H1 (cell line): ENCODE measurements at regions of chr15 and their contacts with region 1.

Region 1: DNA sequence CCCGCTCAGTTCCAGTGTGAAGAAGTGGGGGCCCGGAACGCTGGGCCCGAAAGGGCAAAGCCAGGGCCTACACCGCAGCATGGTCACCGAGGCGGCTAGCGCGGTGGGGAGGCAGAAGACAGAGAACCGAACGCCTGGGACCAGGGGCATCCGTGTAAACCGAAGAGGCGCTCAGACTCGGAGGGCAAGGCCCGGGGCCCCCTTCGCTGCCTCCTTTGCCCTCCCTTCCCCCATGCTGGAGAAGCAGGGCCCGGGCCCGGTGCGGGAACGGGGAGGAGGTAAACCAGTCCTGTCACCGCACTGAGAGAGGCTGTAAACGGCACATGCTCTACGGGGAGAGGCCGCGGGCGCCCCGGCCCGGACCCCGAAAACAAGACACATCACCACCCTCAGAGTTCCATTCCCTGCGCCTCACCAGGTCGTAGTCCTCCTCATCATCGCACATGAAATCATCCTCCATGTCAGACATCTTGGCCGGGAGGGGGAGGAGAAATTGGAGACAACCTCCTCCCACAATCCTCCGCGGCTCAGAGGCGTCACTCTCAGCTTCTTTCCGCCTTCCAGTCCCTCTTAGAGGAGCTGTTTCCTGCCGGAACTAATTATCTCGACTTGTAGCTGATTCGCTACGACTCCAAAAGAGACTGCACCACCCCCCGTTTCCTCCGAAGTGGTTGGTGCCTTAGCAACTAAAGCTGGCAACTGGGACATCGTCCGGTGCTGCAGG is at the start of gene COPS2:
- DNase-seq: peak; percentile 91 to 93
- H3K4me3 ChIP-seq: peak within 1 kb of the TSS; percentile 90 to 99 (median 94)
- H3K27ac ChIP-seq: peak within 1 kb of the TSS; percentile 85
- H3K4me1 ChIP-seq: no peaks in the 10 kb centered on the region
- H3K27me3 ChIP-seq: no peaks in the 10 kb centered on the region
- CTCF ChIP-seq: no peak
- EP300 ChIP-seq: peak in 1 of 2 experiments; percentile 77; a peak in 2 of 3 replicates
- POLR2A ChIP-seq: peak in 1 of 2 experiments; percentile 75; a peak in 2 of 3 replicates
- RAD21 ChIP-seq: peak in 1 of 2 experiments; percentile 16; a peak in 1 of 4 replicates
- total RNA-seq, gene COPS2: 74.1 and 85.1 TPM in 2 replicates

Region 2: DNA sequence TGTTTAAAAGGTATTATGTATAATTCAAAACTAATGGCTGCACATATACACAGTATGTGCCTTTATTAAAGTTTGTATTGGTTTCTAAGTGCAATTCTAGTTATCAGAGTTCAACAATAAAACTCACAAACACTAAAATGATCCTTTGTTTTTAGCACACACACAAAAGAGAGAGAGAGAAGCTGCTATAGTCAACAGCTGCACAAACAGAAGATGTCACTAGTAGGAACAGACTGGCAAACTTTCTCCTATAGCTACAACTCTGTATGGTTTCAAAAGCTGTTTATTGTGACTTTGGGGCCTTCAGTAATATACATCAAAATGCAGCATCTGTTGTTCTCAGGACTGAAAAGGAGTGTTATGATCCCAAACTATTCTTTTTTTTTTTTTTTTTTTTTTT is 115.1 kb before region 1 on chr15:
- CTCF ChIA-PET with region 1: no interaction called
- POLR2A ChIA-PET with region 1: no interaction called
- DNase-seq: no peak
- H3K4me3 ChIP-seq: no peak overlapping the region
- H3K27ac ChIP-seq: no peak overlapping the region
- H3K4me1 ChIP-seq: no peaks in the 10 kb centered on the region
- H3K27me3 ChIP-seq: no peaks in the 10 kb centered on the region
- CTCF ChIP-seq: no peak
- EP300 ChIP-seq: no peak
- POLR2A ChIP-seq: no peak
- RAD21 ChIP-seq: no peak

Region 3: GRCh38 chr15:49169880-49170597 is 14.8 kb after region 1 on chr15 and contains the start of gene GALK2:
- CTCF ChIA-PET with region 1: interaction called, 4 read pairs
- POLR2A ChIA-PET with region 1: interaction called, 17 read pairs
- DNase-seq: peak; percentile 87 to 88
- H3K4me3 ChIP-seq: peak within 1 kb of the TSS; percentile 67 to 88 (median 78)
- H3K27ac ChIP-seq: peak within 1 kb of the TSS; percentile 51
- H3K4me1 ChIP-seq: no peaks in the 10 kb centered on the region
- H3K27me3 ChIP-seq: no peaks in the 10 kb centered on the region; a peak in 2 of 7 replicates
- CTCF ChIP-seq: no peak
- EP300 ChIP-seq: peak in 1 of 2 experiments; percentile 50; a peak in 1 of 3 replicates
- POLR2A ChIP-seq: peak; percentile 50 to 79
- RAD21 ChIP-seq: no peak
- total RNA-seq, gene GALK2: 16.1 and 18.0 TPM in 2 replicates